Sciatic nerve (tissue), 2 donors: ENCODE measurements at regions of chr1 and their contacts with region 1.

Region 1: DNA sequence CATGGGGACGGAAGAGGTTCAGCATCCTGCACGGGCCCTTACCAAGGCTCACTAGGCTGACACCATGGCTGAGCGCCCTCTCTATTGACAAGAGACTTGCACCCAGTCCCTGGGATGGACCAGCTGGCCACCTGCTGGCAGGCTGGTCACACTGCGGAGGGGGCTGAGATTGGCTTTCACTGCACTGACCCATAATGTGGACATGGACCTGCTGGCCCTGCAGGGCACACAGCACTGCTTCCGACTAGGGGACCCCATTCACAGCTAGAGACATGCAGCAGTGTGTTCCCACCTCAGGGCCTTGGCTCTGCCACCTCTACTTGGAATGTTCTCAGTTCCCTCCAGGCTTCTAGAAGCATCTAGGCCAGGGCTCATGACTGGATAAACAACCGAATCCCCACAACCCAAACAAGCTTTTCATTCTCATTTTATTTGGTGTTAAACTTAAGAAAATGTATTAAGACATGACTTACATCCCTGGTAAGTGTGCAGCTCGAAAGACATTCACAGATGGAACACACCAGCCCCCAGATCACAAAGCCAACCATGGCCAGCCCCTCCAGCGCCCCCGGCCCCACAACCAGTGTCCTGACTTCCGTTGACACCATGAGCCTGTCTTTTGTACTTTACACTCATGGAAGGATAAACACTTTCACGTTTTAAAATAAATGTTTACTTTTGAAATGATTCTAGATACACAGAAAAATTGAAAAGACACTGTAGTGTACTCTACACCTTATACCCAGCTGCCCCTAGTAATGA is 9.3 kb upstream of the SRARP start:
- DNase-seq: peak; percentile 82
- ATAC-seq: peak; percentile 88

Region 2: DNA sequence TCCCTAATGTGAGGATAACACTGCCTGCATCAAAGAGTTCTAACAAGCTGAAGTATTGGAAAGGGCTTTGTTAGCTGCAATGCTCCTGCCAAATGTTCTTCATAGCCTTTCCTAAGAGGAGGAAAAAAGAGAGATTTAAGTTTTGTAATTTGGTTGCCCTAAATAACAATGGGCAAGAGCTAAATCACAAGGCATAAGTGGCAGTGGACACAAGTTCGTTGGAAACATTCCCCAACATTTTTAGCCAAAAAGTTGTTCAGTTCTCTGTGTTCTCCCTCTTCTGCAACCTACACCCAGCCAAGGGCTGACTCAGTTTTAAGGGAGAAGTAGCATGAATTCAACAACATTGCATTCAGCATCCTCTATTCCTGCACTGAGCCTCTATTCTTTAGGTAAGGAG is 184.7 kb before region 1 on chr1:
- intact Hi-C with region 1: loop called (anchors 10 kb)
- DNase-seq: no peak
- ATAC-seq: peak; percentile 74